ENCODE measurements at regions of chr17 and their contacts with region 1.

Region 1: DNA sequence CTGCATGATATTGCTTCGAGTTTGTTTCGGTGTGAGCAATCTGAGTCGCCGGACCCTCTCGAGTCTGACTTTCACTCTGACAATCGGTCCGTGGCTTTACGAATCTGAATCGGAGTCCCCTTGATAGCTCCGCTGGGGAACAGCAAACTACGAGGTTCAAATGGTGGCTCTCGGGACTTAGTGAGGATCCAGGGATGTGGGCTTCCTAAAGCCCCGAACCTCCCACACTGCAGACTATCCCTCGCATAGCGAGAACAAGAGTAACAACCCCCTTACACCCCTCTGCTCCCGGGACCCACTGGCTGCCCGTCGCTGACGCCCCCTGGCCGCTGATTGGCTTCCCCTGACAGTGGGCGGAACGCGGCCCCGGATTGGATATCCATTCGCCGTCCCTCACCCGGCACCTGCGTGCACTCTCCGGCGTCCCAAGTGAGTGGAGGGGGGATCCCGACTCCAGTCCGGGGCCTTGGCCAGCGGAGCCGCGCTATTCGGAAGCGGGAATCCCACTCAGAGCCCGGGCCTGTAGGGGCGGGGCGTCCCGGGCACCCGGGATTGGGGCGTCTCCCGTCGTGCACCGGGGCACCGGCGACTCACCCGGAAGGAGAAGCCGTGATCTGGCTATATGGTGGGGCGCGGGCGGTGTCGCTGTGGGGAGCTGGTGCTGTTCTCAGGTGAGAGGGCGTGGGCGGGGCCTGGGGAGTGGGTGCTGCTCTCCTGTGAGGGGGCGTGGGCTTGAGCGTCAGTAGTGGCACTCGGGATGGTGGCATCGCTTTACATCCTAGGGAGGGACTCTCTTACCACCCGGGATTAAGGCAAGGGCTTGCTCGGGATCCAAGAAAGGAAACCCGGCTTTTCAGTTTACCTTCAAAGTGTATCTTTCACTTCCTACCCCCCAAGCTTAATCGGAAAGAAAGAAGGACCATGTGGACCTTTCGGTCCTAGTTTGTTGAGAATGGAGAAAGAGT is at the start of gene SNX11:
- DNase-seq: peak; percentile 63 to 80 (median 73)
- H3K4me3 ChIP-seq: peak within 1 kb of the TSS; percentile 75 to 98 (median 87)
- H3K4me3 Mint-ChIP-seq: peak within 1 kb of the TSS; percentile 98 to 99
- H3K27ac ChIP-seq: peak within 1 kb of the TSS; percentile 76 to 94
- H3K27ac Mint-ChIP-seq: peak within 1 kb of the TSS; percentile 88 to 97 (median 94)
- H3K4me1 ChIP-seq: peaks cover 67 to 79% of the 10 kb centered on the region in 2 donors
- H3K4me1 Mint-ChIP-seq: peaks cover 72% of the 10 kb centered on the region
- H3K27me3 ChIP-seq: no peaks in the 10 kb centered on the region
- H3K27me3 Mint-ChIP-seq: peaks cover 0 to 5% (median 0%) of the 10 kb centered on the region in 3 donors
- CTCF ChIP-seq: no peak
- polyA plus RNA-seq, gene SNX11: 34.3 to 49.3 (median 48.4) TPM

Region 2: GRCh38 chr17:47970704-47971463 is 136.6 kb before region 1 on chr17 and contains the start of gene CDK5RAP3:
- intact Hi-C with region 1: loop called in 1 of 2 experiments (anchors 10 kb)
- DNase-seq: peak; percentile 98 to 100 (median 99)
- H3K4me3 ChIP-seq: peak within 1 kb of the TSS; percentile 63 to 99 (median 98)
- H3K4me3 Mint-ChIP-seq: peak within 1 kb of the TSS; percentile 91 to 94
- H3K27ac ChIP-seq: peak within 1 kb of the TSS; percentile 43 to 85
- H3K27ac Mint-ChIP-seq: peak within 1 kb of the TSS; percentile 75 to 95 (median 88)
- H3K4me1 ChIP-seq: peaks cover 20 to 22% of the 10 kb centered on the region in 2 donors
- H3K4me1 Mint-ChIP-seq: peaks cover 23% of the 10 kb centered on the region
- H3K27me3 ChIP-seq: no peaks in the 10 kb centered on the region
- H3K27me3 Mint-ChIP-seq: peaks cover 2% of the 10 kb centered on the region in 3 donors
- CTCF ChIP-seq: peak; percentile 97
- polyA plus RNA-seq, gene CDK5RAP3: 86.1 to 782 (median 94.4) TPM

Region 3: DNA sequence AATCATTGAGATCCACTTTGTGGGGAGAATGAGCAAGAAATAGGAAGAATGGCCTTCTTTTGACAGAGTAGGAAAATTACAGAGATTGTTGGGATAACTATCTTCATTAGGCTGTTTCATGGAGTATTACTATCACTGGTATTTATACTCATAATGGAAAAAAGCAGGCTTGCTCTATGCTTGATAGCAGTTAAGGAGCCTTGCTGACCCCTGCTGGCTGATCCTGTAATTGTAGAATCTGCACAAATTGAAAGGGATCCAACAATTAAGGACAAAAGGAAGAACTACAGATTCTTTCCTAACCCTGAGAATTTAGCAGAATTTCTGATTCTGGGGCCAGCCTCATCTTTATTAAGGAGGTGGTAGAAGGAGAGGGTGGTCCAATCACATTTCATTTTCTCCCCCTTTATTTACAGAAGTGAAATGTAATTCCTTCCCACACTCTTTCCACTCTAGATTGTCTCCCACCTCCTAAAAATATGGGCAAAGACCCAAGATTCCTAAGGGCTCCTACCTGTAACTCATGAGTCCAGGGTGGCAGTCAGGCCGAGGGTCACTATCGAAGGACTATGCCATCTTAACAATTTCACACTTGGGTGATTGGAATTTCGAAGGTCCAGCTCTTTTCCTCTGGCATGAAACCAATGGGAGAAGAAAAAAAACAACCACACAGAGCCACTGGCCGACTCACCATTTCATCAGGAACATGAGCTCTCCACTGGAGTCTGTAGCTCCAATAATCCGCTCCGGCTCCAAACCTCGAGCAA is 33.0 kb before region 1 on chr17:
- intact Hi-C with region 1: no loop called
- DNase-seq: peak; percentile 54 to 76 (median 66)
- H3K4me3 ChIP-seq: no peak overlapping the region
- H3K4me3 Mint-ChIP-seq: no peak overlapping the region
- H3K27ac ChIP-seq: no peak overlapping the region
- H3K27ac Mint-ChIP-seq: peak overlapping the region in 1 of 7 donors; percentile 46
- H3K4me1 ChIP-seq: no peaks in the 10 kb centered on the region
- H3K4me1 Mint-ChIP-seq: peaks cover 1% of the 10 kb centered on the region
- H3K27me3 ChIP-seq: no peaks in the 10 kb centered on the region
- H3K27me3 Mint-ChIP-seq: no peaks in the 10 kb centered on the region
- CTCF ChIP-seq: peak; percentile 88